PC-3 (cell line): ENCODE measurements at regions of chr3 and their contacts with region 1.

Region 1: GRCh38 chr3:69532544-69533224 is 146.8 kb upstream of the FRMD4B start:
- DNase-seq: no peak
- ATAC-seq: peak; percentile 61
- H3K4me3 ChIP-seq: no peak overlapping the region
- H3K27ac ChIP-seq: no peak overlapping the region
- H3K4me1 ChIP-seq: no peaks in the 10 kb centered on the region
- H3K27me3 ChIP-seq: no peaks in the 10 kb centered on the region
- CTCF ChIP-seq: no peak

Region 2: GRCh38 chr3:68996356-68996995 is 536.2 kb before region 1 on chr3:
- CTCF ChIA-PET with region 1: no interaction called
- POLR2A ChIA-PET with region 1: no interaction called
- intact Hi-C with region 1: no loop called
- DNase-seq: no peak
- ATAC-seq: no peak
- H3K4me3 ChIP-seq: no peak overlapping the region
- H3K27ac ChIP-seq: no peak overlapping the region
- H3K4me1 ChIP-seq: no peaks in the 10 kb centered on the region
- H3K27me3 ChIP-seq: no peaks in the 10 kb centered on the region
- CTCF ChIP-seq: no peak

Region 3: DNA sequence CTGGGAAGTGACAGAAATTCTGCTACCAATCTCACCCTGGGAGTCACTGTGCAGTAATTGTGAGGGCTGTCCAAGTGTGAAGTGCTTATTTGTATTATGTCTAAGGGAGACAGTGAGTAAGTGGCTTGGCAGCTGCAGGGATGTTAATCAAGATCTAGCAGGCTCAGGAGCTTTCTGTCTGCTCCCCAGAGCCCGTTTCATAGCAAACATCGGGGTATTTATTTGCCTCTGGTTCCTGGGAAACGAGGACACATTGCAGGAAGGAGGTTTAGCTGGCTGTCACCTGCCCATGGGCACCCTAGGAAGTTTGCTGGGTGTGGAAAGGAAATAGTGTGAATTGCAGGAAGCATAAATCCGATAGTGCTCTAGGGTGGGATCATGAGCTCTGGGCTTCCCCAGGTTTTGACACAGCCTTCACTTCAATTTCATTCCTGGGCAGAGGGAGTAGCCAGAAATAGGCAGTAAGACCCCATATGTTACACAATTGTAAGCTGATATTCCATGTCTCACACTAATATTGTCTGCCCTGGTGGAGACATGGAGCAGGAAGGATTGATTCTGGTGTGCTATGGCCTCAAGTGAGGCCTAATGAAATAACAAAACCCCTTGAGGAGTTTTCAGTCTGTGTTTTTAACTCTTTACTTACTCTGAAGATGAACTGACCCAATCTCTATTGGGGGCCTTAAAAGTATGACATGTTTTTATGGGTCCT is 132.5 kb after region 1 on chr3:
- CTCF ChIA-PET with region 1: no interaction called
- POLR2A ChIA-PET with region 1: no interaction called
- intact Hi-C with region 1: loop called (anchors 5 kb)
- DNase-seq: peak; percentile 6
- ATAC-seq: peak; percentile 86
- H3K4me3 ChIP-seq: no peak overlapping the region
- H3K27ac ChIP-seq: no peak overlapping the region
- H3K4me1 ChIP-seq: peaks cover 5% of the 10 kb centered on the region; the same call in 1 of the 2 replicates
- H3K27me3 ChIP-seq: no peaks in the 10 kb centered on the region
- CTCF ChIP-seq: no peak

Region 4: DNA sequence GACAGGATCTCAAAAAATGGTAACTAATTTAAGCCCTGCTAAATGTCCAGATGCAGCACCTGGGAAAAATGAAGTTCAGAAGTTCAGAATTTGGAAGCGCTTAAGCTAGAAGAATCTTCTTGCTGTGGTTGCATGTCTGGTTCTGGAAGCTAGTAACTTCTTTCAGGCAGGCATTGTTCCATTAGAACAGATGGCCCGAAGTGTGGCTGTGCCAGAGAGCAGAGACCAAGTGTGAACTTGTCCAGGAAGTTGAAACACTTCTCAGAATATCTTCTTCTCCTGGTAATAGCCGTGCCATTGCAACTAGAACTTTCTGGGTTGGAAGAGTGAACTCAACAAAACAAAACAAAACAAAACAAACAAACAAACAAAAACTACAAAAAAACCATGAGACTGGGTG is 286.6 kb after region 1 on chr3:
- CTCF ChIA-PET with region 1: no interaction called
- POLR2A ChIA-PET with region 1: no interaction called
- intact Hi-C with region 1: no loop called
- DNase-seq: no peak
- ATAC-seq: no peak
- H3K4me3 ChIP-seq: no peak overlapping the region
- H3K27ac ChIP-seq: no peak overlapping the region
- H3K4me1 ChIP-seq: no peaks in the 10 kb centered on the region
- H3K27me3 ChIP-seq: no peaks in the 10 kb centered on the region
- CTCF ChIP-seq: no peak